Sigmoid colon (tissue), 7 donors: ENCODE measurements at regions of chrX and their contacts with region 1.

Region 1: DNA sequence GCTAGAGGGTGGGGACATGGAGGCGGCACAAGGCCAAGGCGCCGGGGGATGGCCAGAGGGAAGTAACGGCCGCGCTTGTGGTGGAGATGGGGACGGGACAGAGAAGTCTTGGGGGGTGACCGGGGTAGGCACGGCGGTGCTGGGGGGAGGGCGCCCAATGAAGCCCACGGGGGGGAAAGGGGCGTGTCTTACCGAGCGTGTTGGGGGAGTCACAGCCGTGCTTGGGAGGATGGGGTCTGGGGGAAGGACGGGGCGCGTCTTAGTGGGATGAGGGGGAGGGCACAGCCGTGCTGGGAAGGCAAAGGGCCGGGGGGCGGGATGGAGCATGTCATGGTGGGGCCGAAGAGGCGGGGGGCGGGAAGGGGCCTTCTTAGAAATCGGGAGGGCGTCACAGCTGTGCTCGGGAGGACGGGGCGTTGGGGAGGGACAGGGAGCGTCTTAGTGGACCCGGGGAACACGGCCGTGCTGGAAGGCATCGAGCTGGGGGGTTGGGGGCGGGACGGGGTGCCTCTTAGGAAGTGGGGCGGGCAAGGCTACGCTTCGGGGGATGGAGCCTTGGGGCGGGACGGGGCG is 862 bp downstream of the ARSD start:
- DNase-seq: peak; percentile 74
- H3K4me3 ChIP-seq: peak overlapping the region; percentile 50 to 84 (median 68)
- H3K27ac ChIP-seq: peak overlapping the region; percentile 92 to 96 (median 94)
- H3K4me1 ChIP-seq: peaks cover 0 to 9% (median 0%) of the 10 kb centered on the region in 4 donors
- H3K27me3 ChIP-seq: no peaks in the 10 kb centered on the region
- CTCF ChIP-seq: no peak
- EP300 ChIP-seq: no peak
- POLR2A ChIP-seq: no peak

Region 2: DNA sequence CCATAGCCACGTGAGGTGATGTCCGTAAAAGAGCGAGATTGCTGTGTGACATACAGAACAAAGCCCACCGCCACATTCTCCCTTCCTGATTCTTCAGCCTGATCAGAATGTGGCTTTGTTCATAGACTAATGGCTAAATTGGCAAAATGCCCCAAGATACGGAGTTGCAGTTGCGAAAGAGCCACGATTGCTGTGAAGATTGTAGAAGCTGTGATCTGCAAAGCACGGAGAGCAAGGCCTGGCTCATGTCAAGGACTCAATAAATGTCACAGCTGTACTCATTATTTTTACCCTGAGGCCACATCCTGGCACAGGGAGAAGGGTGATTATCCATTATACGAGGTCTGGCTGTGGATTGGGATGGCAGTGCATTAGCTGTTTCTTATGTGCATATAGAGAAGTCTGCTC is 33.4 kb before region 1 on chrX:
- intact Hi-C with region 1: loop called (anchors 2 kb)
- DNase-seq: peak; percentile 88
- H3K4me3 ChIP-seq: no peak overlapping the region
- H3K27ac ChIP-seq: peak overlapping the region in 3 of 4 donors; percentile 22 to 61 (median 22)
- H3K4me1 ChIP-seq: peaks cover 0 to 19% (median 11%) of the 10 kb centered on the region in 4 donors
- H3K27me3 ChIP-seq: no peaks in the 10 kb centered on the region
- CTCF ChIP-seq: no peak
- EP300 ChIP-seq: peak; percentile 23 to 78 (median 38)
- POLR2A ChIP-seq: no peak